Vagina (tissue), 2 donors: ENCODE measurements at regions of chr2 and their contacts with region 1.

Region 1: DNA sequence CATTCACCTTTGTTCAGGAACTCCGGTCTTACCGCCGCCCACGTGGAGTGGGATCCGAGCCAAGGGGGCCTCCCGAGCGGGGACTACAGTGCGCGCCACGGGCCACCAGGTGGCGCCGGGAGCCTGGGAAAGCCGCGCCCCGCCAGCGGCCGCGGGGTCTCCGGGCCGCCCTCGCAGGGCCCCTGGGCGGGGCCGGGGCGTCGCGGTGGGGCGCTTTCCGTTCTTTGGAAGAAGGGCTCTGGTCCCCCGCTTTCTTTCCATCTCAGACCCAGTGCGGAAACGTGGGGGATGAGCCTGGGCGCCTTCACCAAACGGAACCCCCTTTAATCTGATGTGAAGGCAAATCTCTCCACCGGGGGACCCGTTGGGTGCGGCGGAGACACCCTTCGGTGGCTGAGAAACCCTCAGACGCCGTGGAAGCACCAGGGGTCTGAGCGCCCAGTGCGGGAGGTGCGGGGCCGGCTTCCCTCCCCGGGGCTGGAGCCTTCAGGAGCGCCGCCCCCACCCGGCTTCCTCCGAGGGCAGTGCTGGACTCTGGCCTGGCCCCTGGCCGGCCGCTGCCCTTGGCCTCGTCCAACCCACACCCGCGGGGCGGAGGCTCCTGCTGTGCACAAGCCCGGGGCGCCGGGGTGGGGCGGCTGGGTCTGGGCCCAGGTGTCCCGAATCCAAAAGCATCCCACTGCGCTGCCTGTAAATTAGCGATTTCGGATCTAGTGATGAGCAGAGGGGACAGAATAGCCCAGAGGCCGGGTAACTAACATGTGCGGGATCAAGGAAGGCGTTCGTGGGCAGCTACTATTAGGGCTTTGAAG is 44.6 kb downstream of the GORASP2 start:
- DNase-seq: peak in 1 of 2 donors; percentile 95
- H3K4me3 ChIP-seq: peak overlapping the region; percentile 76 to 77
- H3K27ac ChIP-seq: peak overlapping the region; percentile 86
- H3K4me1 ChIP-seq: peaks cover 15% of the 10 kb centered on the region
- H3K27me3 ChIP-seq: no peaks in the 10 kb centered on the region
- CTCF ChIP-seq: peak; percentile 86 to 96 (median 88)
- POLR2A ChIP-seq: no peak

Region 2: GRCh38 chr2:171018522-171018921 is 44.8 kb after region 1 on chr2:
- intact Hi-C with region 1: no loop called
- DNase-seq: no peak
- H3K4me3 ChIP-seq: no peak overlapping the region
- H3K27ac ChIP-seq: no peak overlapping the region
- H3K4me1 ChIP-seq: no peaks in the 10 kb centered on the region
- H3K27me3 ChIP-seq: no peaks in the 10 kb centered on the region
- CTCF ChIP-seq: no peak
- POLR2A ChIP-seq: no peak

Region 3: DNA sequence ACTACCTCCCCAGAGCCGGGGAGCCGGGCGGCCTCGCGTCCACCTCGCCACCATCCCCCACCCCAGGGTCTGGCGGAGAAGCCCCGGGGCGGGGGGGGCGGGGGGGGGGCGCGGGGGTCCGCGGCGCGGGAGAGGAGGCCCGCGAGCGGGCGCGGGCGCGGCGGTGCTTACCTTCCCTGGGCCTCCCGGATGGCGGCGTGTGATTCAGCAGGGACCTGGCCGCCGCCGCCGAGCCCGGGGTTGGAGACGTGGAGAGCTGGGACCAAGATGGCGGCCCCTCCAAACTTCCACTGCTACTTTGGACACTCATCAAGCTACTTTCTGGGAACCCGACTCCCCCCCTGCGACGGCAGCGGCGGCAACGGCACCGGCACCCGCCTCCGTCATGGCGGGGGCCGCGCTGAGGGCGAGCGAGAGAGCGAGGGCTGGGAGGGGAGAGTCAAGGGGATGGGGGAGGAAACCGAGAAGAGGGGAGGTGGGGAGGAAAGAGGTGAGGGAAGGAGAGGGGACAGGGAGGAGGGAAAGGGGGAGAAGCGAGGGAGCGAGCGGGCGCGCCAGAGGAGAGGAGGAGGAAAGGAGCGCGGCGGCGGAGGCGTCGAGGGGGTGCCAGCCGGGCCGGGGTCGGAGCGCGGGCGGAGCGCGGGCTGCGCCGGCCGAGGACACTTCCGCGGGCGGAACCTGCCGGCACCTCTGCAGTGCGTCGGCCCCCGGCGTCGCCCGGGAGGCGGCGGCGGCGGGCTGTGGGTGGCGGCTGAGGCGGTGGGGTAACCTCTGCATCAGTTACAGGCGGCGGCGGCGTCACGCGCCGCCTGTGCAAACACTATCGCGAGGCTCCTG is 186.6 kb after region 1 on chr2 and contains the start of gene TLK1:
- intact Hi-C with region 1: loop called (anchors 5 kb)
- DNase-seq: peak in 1 of 2 donors; percentile 89
- H3K4me3 ChIP-seq: peak within 1 kb of the TSS; percentile 82 to 85
- H3K27ac ChIP-seq: peak within 1 kb of the TSS; percentile 96
- H3K4me1 ChIP-seq: peaks cover 22% of the 10 kb centered on the region
- H3K27me3 ChIP-seq: no peaks in the 10 kb centered on the region
- CTCF ChIP-seq: no peak
- POLR2A ChIP-seq: peak in 1 of 2 donors; percentile 43
- total RNA-seq, gene TLK1: 35.8 TPM

Region 4: GRCh38 chr2:171416009-171416926 is 442.6 kb after region 1 on chr2:
- intact Hi-C with region 1: loop called (anchors 2 kb)
- DNase-seq: no peak
- H3K4me3 ChIP-seq: no peak overlapping the region
- H3K27ac ChIP-seq: peak overlapping the region; percentile 46
- H3K4me1 ChIP-seq: peaks cover 12% of the 10 kb centered on the region
- H3K27me3 ChIP-seq: no peaks in the 10 kb centered on the region
- CTCF ChIP-seq: peak; percentile 64 to 83 (median 79)
- POLR2A ChIP-seq: no peak